ENCODE measurements at regions of chr15 and their contacts with region 1.

Region 1: GRCh38 chr15:41904541-41905005 is 10.7 kb upstream of the SPTBN5 start:
- DNase-seq: peak; percentile 64 to 82 (median 70)
- H3K4me3 ChIP-seq: no peak overlapping the region
- H3K27ac ChIP-seq: no peak overlapping the region
- H3K4me1 ChIP-seq: peaks cover 0 to 26% (median 10%) of the 10 kb centered on the region in 4 experiments
- H3K27me3 ChIP-seq: no peaks in the 10 kb centered on the region

Region 2: DNA sequence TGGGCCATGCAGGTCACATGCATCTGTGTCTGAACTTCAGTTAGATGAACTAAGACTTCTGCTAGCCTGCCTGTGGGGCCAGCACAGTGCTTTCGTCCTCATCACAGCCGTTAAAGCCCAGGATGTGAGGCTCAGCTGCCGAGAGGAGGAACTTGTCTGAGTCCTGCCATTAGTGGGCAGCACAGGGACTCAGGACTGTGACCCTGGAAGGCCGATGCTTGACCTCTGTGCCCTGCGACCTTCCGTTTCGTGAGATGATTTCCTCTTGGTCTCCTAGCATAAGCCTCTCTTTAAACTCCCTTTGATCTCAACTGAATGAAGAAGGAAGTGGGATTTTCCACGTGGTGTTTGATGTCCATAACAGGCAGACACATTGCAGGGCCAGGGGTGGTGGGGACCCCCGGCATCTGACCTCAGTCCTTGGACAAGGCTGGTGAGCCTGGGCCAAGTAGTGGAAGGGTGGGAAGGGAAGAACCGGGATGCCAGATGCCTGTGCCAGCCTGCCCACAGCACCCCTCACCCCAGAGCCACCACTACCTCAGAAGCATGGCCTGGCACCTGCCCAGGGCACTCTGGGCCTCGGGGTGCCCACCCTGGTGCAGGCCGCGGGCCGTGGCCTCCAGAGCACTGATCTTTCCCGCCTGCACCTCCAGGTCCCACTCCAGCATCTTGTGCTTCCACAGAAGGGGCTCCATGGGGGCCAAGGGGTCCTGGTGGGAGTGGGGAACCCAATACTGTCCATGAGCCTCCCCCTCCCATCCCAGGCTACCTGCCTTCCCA is 44.3 kb before region 1 on chr15:
- CTCF ChIA-PET with region 1: interaction called, 10 read pairs
- POLR2A ChIA-PET with region 1: no interaction called
- DNase-seq: peak in 1 of 3 donors; percentile 7
- H3K4me3 ChIP-seq: no peak overlapping the region
- H3K27ac ChIP-seq: no peak overlapping the region
- H3K4me1 ChIP-seq: peaks cover 0 to 8% (median 4%) of the 10 kb centered on the region in 4 experiments
- H3K27me3 ChIP-seq: no peaks in the 10 kb centered on the region

Region 3: DNA sequence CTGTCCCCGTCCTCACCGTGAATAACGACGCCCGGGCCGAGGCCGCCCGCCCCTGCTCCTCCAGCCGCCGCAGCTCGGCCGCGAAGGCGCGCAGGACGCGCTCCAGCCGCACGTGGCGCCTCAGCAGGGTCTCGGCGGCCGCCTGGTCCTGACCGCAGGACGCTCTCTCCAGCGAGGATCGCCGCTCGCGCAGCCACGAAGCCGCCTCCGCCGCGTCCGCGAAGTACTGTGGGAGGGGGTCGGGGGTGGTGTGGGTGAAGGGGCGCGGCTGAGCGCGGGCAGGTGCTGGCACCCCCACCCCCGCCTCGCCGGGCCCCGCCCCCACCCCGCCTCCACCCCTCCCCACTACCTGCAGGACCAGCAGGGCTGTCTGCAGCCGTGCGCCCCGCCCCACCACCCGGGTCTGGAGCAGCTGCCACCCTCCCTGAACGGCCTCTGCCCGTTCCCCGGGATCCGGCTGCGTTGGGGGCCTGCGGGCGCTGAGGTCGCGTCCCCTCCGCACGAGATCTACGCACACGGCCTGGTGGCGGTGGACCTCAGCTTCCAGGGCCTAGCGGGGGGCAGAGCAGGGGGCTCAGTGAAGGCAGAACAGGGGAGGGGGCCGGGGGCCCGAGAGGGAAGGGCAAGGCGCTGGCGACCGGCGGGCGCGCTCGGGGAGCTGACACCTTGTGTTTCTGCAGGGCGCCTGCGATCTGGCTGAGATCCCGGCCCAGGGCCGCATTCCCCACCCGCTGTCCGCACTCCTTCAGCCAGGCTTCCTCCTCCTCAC is 22.5 kb before region 1 on chr15:
- CTCF ChIA-PET with region 1: interaction called, 11 read pairs
- POLR2A ChIA-PET with region 1: no interaction called
- DNase-seq: peak in 2 of 3 donors; percentile 70
- H3K4me3 ChIP-seq: peak overlapping the region in 3 of 7 experiments; percentile 29 to 38 (median 30)
- H3K27ac ChIP-seq: no peak overlapping the region
- H3K4me1 ChIP-seq: peaks cover 0 to 19% (median 11%) of the 10 kb centered on the region in 4 experiments
- H3K27me3 ChIP-seq: peaks cover 0 to 22% (median 10%) of the 10 kb centered on the region in 5 experiments

Region 4: DNA sequence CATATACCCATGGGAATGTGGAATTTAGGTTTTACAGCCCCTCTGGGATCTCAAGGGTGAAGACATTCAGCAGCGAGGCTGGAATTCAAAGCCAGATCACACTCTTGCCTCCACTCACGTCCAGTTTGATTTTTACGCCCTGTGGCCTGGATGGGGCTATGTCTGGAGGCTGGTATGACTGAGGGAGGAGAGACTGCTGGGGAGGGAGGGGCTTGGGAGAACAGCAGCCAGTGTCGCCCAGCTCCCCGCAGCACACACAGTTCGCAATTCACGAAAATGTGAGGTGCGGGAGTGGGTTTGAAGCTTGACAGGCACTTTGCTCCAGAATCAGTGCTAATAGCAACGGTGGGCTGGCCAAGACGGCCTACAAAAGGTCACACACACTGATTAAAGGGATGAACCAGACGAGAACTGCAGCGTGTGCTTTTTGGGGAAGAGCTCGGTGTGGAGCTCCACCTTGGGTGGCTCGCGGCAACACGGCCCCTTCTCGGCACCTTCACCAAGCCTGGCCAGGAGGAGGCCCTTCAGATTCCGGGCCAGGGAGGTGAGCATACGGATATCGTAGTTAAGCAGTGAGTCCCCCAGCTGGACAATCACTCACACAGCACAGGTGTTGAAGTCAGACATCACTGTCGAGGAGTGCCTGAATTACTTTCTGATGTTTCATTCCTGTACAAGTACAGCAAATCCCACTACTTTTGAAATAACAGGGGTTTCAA is 51.4 kb after region 1 on chr15:
- CTCF ChIA-PET with region 1: no interaction called
- POLR2A ChIA-PET with region 1: no interaction called
- DNase-seq: no peak
- H3K4me3 ChIP-seq: no peak overlapping the region
- H3K27ac ChIP-seq: no peak overlapping the region
- H3K4me1 ChIP-seq: peaks cover 0 to 8% (median 4%) of the 10 kb centered on the region in 4 experiments
- H3K27me3 ChIP-seq: no peaks in the 10 kb centered on the region

Region 5: DNA sequence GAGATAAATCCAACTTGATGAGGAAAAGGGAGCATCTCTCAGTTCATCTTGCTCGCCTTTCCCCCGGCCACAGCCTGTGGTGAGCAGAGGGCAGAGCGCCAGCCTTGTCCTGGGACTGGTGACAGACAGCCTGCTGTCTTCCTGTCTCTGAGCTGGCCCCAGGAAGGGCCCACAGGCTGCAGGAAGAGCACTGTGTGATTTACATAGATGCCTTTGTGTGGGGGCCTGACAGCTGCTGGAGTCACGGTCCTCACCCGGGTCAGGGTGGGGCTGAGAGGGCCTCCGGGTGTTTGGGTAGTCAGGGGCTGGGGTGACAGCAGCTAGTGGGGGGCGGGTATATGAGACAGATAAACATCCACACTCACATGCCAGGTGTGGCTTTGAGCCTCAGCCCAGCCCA is 160.5 kb after region 1 on chr15:
- CTCF ChIA-PET with region 1: no interaction called
- POLR2A ChIA-PET with region 1: no interaction called
- DNase-seq: peak in 2 of 3 donors; percentile 20 to 33
- H3K4me3 ChIP-seq: no peak overlapping the region
- H3K27ac ChIP-seq: no peak overlapping the region
- H3K4me1 ChIP-seq: peaks cover 0 to 19% (median 14%) of the 10 kb centered on the region in 4 experiments
- H3K27me3 ChIP-seq: peaks cover 0 to 3% (median 0%) of the 10 kb centered on the region in 5 experiments

Region 6: DNA sequence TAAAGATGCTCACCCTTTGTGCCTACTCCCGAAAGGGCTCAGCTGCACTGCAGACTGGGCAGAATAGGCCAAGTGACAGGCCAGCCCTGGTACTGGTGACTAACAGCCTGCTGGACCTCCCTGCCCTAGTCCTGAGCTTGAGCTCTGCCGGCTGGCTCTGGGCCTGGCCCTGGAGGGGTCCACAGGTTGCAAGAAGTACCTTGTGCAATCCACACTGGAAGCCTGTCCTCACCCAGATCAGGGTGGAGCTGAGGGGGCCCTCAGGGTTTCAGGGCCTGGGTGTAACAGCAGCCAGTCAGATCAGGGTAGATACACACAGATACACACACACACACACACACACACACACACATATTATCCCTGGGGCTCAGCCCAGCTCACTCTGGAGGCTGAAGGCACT is 217.1 kb after region 1 on chr15:
- CTCF ChIA-PET with region 1: no interaction called
- POLR2A ChIA-PET with region 1: no interaction called
- DNase-seq: no peak
- H3K4me3 ChIP-seq: no peak overlapping the region
- H3K27ac ChIP-seq: no peak overlapping the region
- H3K4me1 ChIP-seq: peaks cover 0 to 28% (median 3%) of the 10 kb centered on the region in 4 experiments
- H3K27me3 ChIP-seq: no peaks in the 10 kb centered on the region

Measured in common myeloid progenitor, CD34-positive (primary cell).